ENCODE measurements at regions of chr19 and their contacts with region 1.

Region 1: DNA sequence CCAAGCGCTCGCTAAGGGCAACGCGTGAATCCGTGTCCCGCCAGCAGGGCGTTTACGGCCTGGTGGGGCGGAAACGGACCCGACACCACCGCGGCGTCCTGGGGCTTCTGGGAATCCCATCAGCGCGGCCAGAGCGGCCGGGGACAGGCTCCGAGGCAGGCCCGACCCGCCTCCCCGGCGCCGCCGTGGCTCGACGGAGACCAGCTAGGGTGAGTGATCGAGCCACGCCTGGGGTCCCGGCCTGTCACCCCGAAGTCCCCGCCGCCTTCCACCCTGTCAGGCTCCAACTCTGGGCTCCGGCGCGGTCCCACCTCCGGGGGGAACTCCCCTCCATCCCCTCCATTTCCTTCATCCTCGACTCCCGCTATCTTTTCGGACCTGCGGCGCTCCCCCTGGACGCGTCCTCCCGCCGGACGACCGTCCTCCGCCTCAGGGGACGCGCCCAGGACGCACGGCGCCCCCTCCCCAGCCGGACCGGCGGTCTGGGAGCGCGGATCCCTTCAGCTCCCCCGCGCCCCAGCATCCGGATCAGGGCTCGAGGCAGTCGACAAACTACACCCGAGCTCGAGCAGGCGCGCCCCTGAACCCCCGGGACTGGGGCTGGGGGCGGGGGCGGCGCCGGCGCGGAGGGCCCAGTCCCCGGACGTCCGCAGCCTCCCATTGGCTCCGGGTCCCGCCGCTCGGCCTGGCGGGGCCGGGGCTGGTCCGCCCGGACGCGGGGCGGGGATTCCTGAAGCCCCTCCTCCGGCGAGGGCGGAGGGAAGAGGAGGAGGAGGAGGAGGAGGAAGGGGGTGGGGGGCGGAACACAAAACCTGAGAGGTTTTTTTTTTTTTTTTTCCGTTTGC is 638 bp upstream of the BICRA start:
- DNase-seq: peak; percentile 97
- H3K4me3 Mint-ChIP-seq: peak overlapping the region; percentile 84
- H3K27ac Mint-ChIP-seq: peak overlapping the region; percentile 80
- H3K4me1 Mint-ChIP-seq: peaks cover 34% of the 10 kb centered on the region
- H3K27me3 Mint-ChIP-seq: no peaks in the 10 kb centered on the region

Region 2: DNA sequence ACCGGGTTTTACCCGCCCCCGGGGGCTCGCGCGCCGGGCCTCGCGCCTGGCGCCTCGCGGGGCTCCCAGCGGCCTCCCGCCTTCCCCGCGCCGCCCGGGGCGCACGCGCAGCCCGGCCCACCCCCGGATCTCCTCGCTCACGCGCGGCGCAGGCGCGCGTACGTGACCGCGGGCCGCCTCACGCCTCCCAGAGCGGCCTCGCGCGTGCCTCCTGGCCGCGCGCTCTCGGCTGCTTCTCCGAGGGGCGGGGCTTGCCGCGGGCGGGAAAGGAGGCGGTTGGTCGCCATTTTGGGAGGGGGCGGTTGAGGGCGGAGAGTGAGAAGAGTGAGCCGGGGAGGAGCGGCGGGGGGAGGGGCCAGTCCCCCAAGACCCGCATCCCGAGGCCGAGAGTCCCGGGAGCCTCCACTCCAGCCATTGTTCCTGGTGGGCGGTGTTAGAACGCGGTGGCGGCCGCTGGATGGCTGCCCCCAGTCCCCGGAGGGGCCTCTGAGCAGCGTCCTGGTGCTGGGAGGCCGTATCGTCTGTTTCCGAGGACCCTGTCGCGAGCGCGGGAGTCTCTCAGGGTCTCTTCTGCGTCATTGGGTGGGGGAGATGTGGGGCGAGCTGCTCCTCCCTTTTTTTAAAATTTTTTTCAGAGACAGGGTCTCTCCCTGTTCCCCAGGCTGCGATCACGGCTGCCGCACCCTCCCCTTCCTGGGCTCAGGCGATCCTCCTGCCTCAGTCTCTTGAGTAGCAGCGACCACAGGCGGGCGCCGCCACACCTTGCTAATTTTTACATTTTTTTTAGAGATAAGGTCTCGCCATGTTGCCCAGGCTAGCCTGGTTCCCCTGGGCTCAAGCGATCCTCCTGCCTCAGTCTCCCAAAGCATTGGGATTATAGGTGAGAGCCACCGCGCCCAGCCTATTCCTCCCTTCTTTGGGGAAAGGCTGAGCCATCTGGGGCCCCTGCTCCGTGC is 34.9 kb before region 1 on chr19 and contains the start of gene ZNF541:
- CTCF ChIA-PET with region 1: no interaction called
- POLR2A ChIA-PET with region 1: no interaction called
- intact Hi-C with region 1: loop called (anchors 5 kb)
- DNase-seq: peak; percentile 85
- H3K4me3 Mint-ChIP-seq: peak within 1 kb of the TSS; percentile 12
- H3K27ac Mint-ChIP-seq: no peak within 1 kb of the TSS
- H3K4me1 Mint-ChIP-seq: peaks cover 18% of the 10 kb centered on the region
- H3K27me3 Mint-ChIP-seq: no peaks in the 10 kb centered on the region
- total RNA-seq, gene ZNF541: 0.07 to 0.31 TPM

Measured in activated CD4-positive, alpha-beta memory T cell treated with anti-CD3 and anti-CD28 coated beads for 36 hours (primary cell).